Mucosa of descending colon (tissue), 3 donors: ENCODE measurements at regions of chr12 and their contacts with region 1.

Region 1: GRCh38 chr12:130818635-130819576 is 20.1 kb downstream of the STX2 start:
- DNase-seq: peak; percentile 76 to 86 (median 86)
- ATAC-seq: peak; percentile 98
- H3K4me3 ChIP-seq: no peak overlapping the region
- H3K4me1 ChIP-seq: peaks cover 4% of the 10 kb centered on the region
- CTCF ChIP-seq: peak; percentile 90

Region 2: DNA sequence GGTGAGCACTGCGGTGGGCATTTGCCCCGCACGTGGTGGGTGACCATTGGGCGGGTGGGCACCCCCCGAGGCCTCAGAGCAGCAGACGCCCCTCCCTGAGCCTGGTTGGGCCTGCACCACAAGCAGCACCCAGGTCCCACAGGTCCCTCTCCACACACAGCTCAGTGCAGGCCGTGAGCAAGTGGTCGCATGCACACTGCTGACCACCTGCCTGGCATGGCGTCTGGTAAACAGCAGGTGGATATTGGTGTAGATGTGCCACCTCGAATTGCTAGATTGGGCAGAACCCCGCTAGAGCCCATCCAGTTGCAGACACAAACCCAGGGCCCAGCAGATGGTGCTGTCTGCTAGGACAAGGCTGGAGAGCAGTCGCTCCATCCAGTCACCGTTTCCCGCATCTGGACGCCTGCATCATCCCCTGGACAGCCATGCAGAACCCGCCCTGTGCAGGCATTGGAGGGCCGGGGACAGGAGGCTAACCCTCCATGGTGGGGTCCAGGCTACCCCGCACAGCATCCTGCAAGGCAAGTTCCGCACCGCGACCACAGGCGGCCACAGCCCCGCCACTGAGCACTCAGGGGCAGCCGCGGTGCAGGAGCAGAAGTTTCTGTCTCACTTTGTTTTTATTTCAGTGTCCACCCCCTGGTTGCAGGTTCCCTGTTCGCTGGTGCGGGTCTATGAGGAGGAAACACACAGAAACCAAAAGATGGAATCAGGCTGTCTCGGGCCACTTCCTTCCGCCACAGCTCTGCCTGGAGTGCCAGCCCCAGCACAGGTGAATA is 57.2 kb before region 1 on chr12:
- intact Hi-C with region 1: loop called in 1 of 2 experiments (anchors 5 kb)
- DNase-seq: peak in 2 of 3 donors; percentile 57 to 63
- ATAC-seq: peak; percentile 67
- H3K4me3 ChIP-seq: no peak overlapping the region
- H3K4me1 ChIP-seq: no peaks in the 10 kb centered on the region
- CTCF ChIP-seq: no peak

Region 3: DNA sequence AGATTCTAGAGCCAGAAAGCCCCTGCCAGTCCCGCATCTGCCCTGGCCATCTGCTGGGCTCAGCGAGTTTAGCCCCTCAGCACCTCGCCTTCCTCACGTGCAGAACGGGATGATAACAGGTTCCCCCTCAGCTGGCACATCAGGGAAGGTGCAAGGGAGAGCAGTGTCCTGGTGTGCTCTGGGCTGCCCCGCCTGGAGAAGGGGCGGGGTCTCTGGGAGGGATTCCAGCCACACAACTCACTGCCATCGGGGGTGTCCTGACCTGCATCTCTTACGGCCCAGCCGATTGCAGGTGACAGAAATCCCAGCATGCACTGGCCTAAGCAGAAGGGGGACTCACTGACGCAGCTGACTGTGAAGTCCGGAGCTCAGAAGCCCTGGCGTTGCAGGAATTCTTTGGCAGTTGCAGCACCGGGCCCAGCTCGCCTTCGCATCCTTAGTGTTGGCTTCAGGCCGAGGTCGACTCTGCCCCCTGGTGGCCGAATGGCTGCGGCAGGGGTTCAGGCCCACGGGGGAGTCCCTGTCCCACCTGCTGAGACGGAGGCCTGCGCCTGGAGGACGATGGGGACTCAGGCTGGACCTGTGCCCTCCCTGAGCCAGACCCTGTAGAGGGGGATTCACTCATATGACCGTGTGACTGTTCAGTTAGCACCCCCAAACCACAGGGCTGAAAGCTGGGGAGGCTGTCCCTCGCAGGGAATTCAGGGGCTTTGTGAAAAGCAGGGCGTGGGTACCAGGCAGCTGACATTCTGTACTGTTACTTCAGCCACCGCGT is 313.4 kb after region 1 on chr12:
- intact Hi-C with region 1: no loop called
- DNase-seq: peak; percentile 60 to 77 (median 67)
- ATAC-seq: peak; percentile 64
- H3K4me3 ChIP-seq: no peak overlapping the region
- H3K4me1 ChIP-seq: no peaks in the 10 kb centered on the region
- CTCF ChIP-seq: peak; percentile 60

Region 4: DNA sequence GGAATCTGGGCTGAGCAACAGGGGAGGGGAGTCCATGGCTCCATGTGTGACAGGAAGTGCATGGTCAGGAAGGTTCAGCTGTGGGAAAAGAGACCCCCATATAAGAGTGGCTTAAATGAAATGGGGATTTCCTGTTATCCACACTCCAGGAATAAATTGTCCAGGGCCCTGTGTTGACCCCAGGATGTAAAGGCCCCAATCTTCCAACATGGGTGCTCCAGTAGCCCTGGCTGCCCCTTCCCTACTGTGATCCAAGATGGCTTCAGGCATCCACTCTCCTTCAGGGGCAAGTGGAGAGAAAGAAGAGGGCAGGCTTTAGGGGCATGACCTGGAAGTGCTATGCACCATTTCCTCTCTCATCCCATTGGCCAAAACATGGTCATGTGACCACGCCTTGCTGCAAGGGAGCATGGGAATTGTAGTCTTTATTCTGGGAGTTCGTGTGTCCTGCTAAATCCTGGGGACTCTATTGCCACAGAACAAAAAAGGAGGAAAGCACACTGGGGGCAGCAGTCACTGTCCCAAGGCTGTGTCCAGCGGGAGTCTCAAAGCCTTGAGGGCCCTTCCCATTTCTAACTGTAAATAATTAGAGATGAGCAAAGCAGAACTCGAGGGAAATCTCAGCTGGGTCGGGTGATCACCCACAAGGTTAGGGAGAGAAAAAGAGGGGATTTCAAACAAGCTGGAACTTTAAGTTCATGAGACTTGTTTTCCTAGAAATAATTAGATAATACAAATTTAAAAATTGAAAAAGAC is 424.0 kb after region 1 on chr12:
- intact Hi-C with region 1: no loop called
- DNase-seq: no peak
- ATAC-seq: peak; percentile 31
- H3K4me3 ChIP-seq: no peak overlapping the region
- H3K4me1 ChIP-seq: no peaks in the 10 kb centered on the region
- CTCF ChIP-seq: no peak